Dendritic cell treated with granulocyte-macrophage colony-stimulating factor and Interleukin-4, amounts not matched to agents 40 ng/mL and 50 ng/mL, for 4 days (primary cell): ENCODE measurements at regions of chr3 and their contacts with region 1.

Region 1: DNA sequence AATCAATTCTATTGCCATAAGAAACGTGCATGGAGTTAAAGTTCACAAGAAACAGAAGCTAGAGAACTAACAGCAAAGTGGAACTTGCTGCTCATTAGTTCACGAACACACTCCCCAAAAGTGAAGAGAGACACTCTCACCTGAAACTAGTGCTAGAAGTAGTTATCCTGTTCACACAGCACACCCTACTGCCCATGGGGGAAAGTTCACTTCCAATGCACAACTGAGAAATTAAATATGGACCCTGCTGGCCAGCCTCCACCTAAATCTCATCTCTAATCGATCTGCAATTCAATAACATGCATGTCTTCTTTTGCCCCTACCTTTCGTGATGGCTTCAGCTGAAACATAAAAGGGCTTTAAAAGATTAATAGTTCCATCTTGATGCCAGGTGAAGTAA is 39.4 kb upstream of the FRMD4B start:
- H3K4me3 Mint-ChIP-seq: no peak overlapping the region
- H3K27ac Mint-ChIP-seq: no peak overlapping the region
- H3K4me1 Mint-ChIP-seq: peaks cover 16% of the 10 kb centered on the region
- H3K27me3 Mint-ChIP-seq: no peaks in the 10 kb centered on the region

Region 2: GRCh38 chr3:69161587-69162307 is 263.5 kb before region 1 on chr3:
- intact Hi-C with region 1: loop called (anchors 5 kb)
- H3K4me3 Mint-ChIP-seq: no peak overlapping the region
- H3K27ac Mint-ChIP-seq: no peak overlapping the region
- H3K4me1 Mint-ChIP-seq: no peaks in the 10 kb centered on the region
- H3K27me3 Mint-ChIP-seq: no peaks in the 10 kb centered on the region

Region 3: DNA sequence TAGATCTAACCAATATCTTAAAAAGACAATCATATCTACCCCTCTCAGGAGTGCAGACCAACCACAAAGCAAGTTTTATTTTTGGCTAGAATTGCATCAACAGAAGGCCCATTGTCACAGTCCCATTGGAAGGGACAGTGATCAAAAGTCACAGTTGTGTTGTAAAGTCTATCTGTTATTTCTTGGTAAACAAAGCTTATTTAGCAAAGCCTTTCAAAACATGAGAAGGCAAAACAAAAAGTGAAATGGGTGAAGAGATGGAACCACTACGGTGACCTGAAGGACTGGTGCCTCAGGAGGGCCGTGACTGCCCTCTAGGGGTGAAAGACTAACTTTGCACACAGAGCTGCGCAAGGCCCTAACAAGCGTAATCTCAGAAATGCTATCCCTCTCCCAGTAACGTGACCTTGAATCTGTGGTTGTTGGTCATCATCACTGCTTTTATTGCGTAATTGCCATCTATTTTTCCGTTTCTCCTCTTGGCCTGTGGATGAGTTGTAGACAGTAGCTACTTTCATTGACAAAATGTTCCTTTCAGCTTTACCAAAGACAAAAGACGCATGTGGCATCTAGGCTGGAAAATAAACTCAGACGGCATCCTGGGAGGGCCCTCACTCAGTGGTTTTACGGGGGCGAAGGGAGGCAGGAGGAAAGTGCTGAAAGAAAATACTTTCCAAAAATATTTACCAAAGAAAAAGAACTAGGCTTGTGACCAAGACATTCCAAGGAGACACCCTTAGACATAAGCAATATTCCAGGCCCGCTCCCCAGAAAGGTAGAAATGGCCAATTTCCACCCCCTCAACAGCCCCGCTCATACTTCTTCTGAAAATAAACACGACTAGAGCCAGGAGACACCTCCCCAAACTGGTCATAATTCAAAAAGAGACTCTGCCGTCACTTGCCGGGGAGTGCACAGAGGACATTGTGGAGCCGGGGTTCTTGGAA is 118.7 kb before region 1 on chr3:
- intact Hi-C with region 1: loop called (anchors 5 kb)
- H3K4me3 Mint-ChIP-seq: no peak overlapping the region
- H3K27ac Mint-ChIP-seq: peak overlapping the region; percentile 51
- H3K4me1 Mint-ChIP-seq: peaks cover 16% of the 10 kb centered on the region
- H3K27me3 Mint-ChIP-seq: no peaks in the 10 kb centered on the region

Region 4: DNA sequence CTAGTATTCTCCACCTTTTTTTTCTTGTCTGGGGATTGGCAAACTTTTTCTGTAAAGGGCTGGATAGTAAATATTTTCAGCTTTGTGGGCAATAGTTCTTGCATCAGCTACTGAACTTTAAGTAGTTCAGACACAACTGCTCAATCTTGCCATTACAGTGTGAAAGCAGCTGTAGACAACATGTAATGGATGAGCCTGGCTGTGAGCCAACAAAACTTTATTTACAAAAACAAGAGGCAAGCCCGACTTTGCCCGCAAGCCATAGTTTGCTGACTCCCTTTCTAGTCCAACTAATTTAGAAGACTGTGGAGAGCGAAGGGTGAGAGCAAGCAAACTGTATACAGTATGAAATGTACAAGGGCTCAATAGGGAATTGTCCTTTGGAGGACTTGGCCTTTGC is 45.6 kb before region 1 on chr3:
- intact Hi-C with region 1: loop called (anchors 5 kb)
- H3K4me3 Mint-ChIP-seq: no peak overlapping the region
- H3K27ac Mint-ChIP-seq: no peak overlapping the region
- H3K4me1 Mint-ChIP-seq: peaks cover 23% of the 10 kb centered on the region
- H3K27me3 Mint-ChIP-seq: peaks cover 1% of the 10 kb centered on the region

Region 5: GRCh38 chr3:69628951-69629350 is 203.7 kb after region 1 on chr3:
- intact Hi-C with region 1: no loop called
- H3K4me3 Mint-ChIP-seq: no peak overlapping the region
- H3K27ac Mint-ChIP-seq: no peak overlapping the region
- H3K4me1 Mint-ChIP-seq: no peaks in the 10 kb centered on the region
- H3K27me3 Mint-ChIP-seq: no peaks in the 10 kb centered on the region